ENCODE measurements at regions of chr14 and their contacts with region 1.

Region 1: DNA sequence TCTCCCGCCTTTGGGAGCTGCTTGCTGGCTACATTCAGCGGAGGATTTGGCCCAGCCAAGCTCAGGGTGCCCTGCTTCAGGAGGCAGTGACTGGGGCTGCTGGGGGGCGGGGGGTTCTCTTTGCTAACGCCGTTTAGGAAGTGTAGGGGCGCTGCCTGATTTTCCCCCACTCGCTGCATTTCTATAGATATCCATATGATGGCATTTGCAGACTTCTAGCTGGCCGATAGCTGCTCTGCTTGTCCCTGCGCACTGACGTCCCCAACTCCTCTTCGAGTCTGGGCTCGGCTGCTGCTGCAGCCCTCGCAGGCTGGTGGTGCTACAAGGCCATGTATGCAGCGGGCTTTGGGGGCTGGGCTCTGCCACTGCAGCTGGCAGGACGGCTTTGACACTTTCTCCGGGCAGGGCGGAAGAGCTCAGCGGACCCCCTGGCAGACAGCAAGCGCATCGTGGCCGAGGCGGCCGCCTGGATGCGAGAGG is 3.1 kb downstream of the LRFN5 start:
- DNase-seq: peak; percentile 69 to 87
- H3K4me3 ChIP-seq: peak overlapping the region; percentile 51
- H3K4me1 ChIP-seq: peaks cover 11% of the 10 kb centered on the region
- H3K27me3 ChIP-seq: no peaks in the 10 kb centered on the region

Region 2: GRCh38 chr14:39988939-39989338 is 1620.8 kb before region 1 on chr14:
- in situ Hi-C with region 1: loop called (anchors 25 kb)
- DNase-seq: peak; percentile 15 to 54
- H3K4me3 ChIP-seq: no peak overlapping the region
- H3K4me1 ChIP-seq: no peaks in the 10 kb centered on the region
- H3K27me3 ChIP-seq: no peaks in the 10 kb centered on the region